ENCODE measurements at regions of chr7 and their contacts with region 1.

Region 1: GRCh38 chr7:106153891-106154449 is 41.9 kb upstream of the SYPL1 start:
- DNase-seq: peak; percentile 82
- H3K4me3 ChIP-seq: no peak overlapping the region
- CTCF ChIP-seq: peak; percentile 96

Region 2: GRCh38 chr7:106056513-106057203 is 97.3 kb before region 1 on chr7:
- in situ Hi-C with region 1: loop called (anchors 25 kb)
- DNase-seq: peak; percentile 69
- H3K4me3 ChIP-seq: no peak overlapping the region
- CTCF ChIP-seq: peak; percentile 89

Measured in astrocyte of the spinal cord (primary cell).